Naive thymus-derived CD4-positive, alpha-beta T cell (primary cell): ENCODE measurements at regions of chr11 and their contacts with region 1.

Region 1: GRCh38 chr11:6225024-6225423 is 9.4 kb downstream of the FHIP1B start:
- DNase-seq: no peak
- ATAC-seq: no peak
- H3K4me3 ChIP-seq: no peak overlapping the region
- H3K4me3 Mint-ChIP-seq: no peak overlapping the region
- H3K27ac ChIP-seq: no peak overlapping the region
- H3K27ac Mint-ChIP-seq: no peak overlapping the region
- H3K4me1 ChIP-seq: peaks cover 5 to 16% of the 10 kb centered on the region in 2 donors
- H3K4me1 Mint-ChIP-seq: peaks cover 23 to 69% (median 55%) of the 10 kb centered on the region in 7 donors
- H3K27me3 ChIP-seq: no peaks in the 10 kb centered on the region
- H3K27me3 Mint-ChIP-seq: no peaks in the 10 kb centered on the region

Region 2: GRCh38 chr11:7454855-7455254 is 1229.8 kb after region 1 on chr11:
- CTCF ChIA-PET with region 1: no interaction called
- POLR2A ChIA-PET with region 1: interaction called, 14 read pairs
- intact Hi-C with region 1: no loop called
- DNase-seq: no peak
- ATAC-seq: no peak
- H3K4me3 ChIP-seq: no peak overlapping the region
- H3K4me3 Mint-ChIP-seq: no peak overlapping the region
- H3K27ac ChIP-seq: no peak overlapping the region
- H3K27ac Mint-ChIP-seq: no peak overlapping the region
- H3K4me1 ChIP-seq: no peaks in the 10 kb centered on the region
- H3K4me1 Mint-ChIP-seq: peaks cover 0 to 1% (median 0%) of the 10 kb centered on the region in 7 donors
- H3K27me3 ChIP-seq: no peaks in the 10 kb centered on the region
- H3K27me3 Mint-ChIP-seq: no peaks in the 10 kb centered on the region